Heart right ventricle (tissue), 16 donors: ENCODE measurements at regions of chr9 and their contacts with region 1.

Region 1: GRCh38 chr9:122940603-122941559 is at the start of gene RABGAP1:
- DNase-seq: peak; percentile 99 to 100
- ATAC-seq: peak; percentile 97 to 99 (median 99)
- H3K4me3 ChIP-seq: peak within 1 kb of the TSS; percentile 77 to 96 (median 88)
- H3K27ac ChIP-seq: peak within 1 kb of the TSS; percentile 76 to 94 (median 88)
- H3K4me1 ChIP-seq: peaks cover 3 to 51% (median 36%) of the 10 kb centered on the region in 9 donors
- H3K27me3 ChIP-seq: no peaks in the 10 kb centered on the region
- CTCF ChIP-seq: no peak
- total RNA-seq, gene RABGAP1: 36.9 to 62.3 (median 48.7) TPM

Region 2: GRCh38 chr9:122827761-122828093 is 113.2 kb before region 1 on chr9:
- intact Hi-C with region 1: no loop called
- DNase-seq: no peak
- ATAC-seq: peak in 5 of 8 donors; percentile 8 to 46 (median 19)
- H3K4me3 ChIP-seq: peak overlapping the region; percentile 64 to 97 (median 91)
- H3K27ac ChIP-seq: peak overlapping the region; percentile 85 to 99 (median 96)
- H3K4me1 ChIP-seq: peaks cover 4 to 37% (median 25%) of the 10 kb centered on the region in 9 donors
- H3K27me3 ChIP-seq: no peaks in the 10 kb centered on the region
- CTCF ChIP-seq: no peak

Region 3: DNA sequence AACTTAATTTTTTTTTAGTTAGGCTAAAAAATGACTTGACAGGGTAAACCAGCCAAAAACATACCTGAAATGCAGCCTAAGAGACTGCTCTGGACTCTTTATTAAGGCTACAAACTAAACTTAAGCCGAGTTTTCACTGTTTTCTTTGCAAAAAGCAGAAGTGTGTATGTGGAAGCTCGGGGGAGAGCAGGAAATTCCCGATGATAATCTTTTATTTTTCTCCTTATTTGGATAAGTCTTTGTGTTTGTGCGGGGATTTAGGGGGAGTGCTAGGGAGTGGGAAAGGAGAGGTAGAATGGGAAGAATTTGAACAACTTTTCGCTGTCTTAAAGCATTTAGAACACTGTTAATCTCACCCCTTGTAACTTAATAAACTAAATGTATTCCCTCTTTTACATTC is 61.9 kb after region 1 on chr9:
- intact Hi-C with region 1: loop called in 1 of 10 experiments (anchors 5 kb)
- DNase-seq: no peak
- ATAC-seq: peak in 1 of 8 donors; percentile 53
- H3K4me3 ChIP-seq: no peak overlapping the region
- H3K27ac ChIP-seq: peak overlapping the region in 8 of 10 donors; percentile 5 to 52 (median 42)
- H3K4me1 ChIP-seq: peaks cover 0 to 24% (median 11%) of the 10 kb centered on the region in 9 donors
- H3K27me3 ChIP-seq: no peaks in the 10 kb centered on the region
- CTCF ChIP-seq: no peak